ENCODE measurements at regions of chr14 and their contacts with region 1.

Region 1: DNA sequence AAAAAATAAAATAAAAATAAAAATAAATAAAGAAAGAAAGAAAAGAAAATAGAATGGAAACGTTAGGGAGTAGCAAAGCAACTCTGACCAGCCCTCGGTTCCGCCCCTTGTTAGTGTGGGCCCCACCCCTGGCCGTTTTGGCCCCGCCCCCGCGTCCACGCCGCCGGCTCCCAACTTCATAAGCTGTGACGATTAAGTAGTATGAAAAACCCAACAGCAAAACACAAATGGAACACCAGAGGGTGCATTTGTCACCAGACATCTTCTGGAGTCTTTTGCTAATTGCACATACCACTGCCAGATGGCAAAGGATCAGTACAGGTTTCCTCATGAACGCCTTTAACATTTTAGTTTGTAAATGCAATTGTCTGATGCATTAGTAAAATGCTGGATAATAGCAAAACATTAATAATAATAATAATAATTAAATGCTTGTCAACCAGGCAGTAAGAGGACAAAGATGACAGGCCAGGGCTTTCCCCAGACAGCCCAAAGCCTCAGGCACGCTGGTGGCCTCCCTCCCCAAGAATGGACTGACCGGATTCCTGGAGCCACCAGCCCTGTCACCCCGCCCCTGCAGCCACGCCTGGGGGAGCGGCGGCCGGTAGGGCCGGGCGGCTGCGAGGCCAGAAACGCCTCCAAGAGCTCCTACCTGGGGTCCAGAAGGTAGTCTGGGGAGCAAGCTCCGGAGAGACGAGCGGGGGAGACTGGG is 23.6 kb downstream of the HSP90AA1 start:
- DNase-seq: peak; percentile 84 to 91
- ATAC-seq: peak; percentile 87 to 96 (median 92)
- H3K4me3 ChIP-seq: peak overlapping the region; percentile 31
- H3K27ac ChIP-seq: no peak overlapping the region
- H3K4me1 ChIP-seq: no peaks in the 10 kb centered on the region
- H3K27me3 ChIP-seq: no peaks in the 10 kb centered on the region
- CTCF ChIP-seq: peak; percentile 49

Region 2: DNA sequence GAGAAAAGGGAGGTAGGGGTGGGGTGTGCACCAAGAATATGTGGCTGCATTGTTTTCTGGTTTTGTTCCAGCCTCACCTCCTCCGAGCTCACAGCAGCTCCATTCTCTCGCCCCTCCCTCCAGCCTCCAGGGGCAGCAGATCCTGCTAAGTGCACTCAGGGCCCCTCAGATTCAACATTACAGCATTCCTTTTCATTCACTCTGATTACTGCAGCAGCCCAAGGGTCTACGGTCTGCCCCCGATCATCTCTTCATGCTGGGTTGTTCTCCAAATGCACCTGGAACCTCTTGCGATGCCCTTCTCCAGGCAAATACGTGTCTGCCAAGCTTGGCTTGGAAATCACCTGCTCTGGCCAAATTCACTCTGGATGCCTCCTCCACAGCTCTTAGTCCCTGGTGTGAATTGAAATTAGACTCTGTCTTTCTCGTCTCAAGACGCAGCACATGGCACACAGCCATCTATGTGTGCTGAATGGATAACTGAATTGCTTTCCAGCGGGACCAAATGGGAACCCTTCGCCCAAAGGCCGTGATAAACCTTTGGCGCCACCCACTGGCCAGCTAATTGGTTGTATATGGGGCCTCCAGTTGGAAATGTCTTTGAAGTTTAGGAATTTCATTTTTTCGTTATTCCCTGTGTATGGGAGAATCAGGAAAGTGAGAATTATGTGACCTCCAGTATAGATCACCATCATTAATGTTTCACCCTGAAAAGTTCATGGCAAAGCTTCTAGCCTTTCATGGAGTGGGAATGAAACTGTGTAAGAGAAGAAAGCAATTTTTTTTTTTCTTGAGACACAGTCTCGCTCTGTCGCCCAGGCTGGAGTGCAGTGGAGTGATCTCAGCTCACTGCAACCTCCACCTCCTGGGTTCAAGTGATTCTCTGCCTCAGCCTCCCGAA is 33.2 kb after region 1 on chr14:
- intact Hi-C with region 1: loop called in 1 of 2 experiments (anchors 1 kb)
- DNase-seq: peak; percentile 88 to 93
- ATAC-seq: peak; percentile 85 to 98 (median 88)
- H3K4me3 ChIP-seq: no peak overlapping the region
- H3K27ac ChIP-seq: no peak overlapping the region
- H3K4me1 ChIP-seq: peaks cover 10% of the 10 kb centered on the region
- H3K27me3 ChIP-seq: no peaks in the 10 kb centered on the region
- CTCF ChIP-seq: peak; percentile 84